ENCODE measurements at regions of chr6 and their contacts with region 1.

Region 1: GRCh38 chr6:106444777-106445507 is 84.4 kb downstream of the CRYBG1 start:
- DNase-seq: peak in 1 of 2 donors; percentile 85
- ATAC-seq: peak; percentile 82 to 93 (median 88)
- H3K4me3 ChIP-seq: no peak overlapping the region
- H3K4me3 Mint-ChIP-seq: no peak overlapping the region
- H3K27ac ChIP-seq: no peak overlapping the region
- H3K27ac Mint-ChIP-seq: no peak overlapping the region
- H3K4me1 ChIP-seq: peaks cover 10% of the 10 kb centered on the region
- H3K4me1 Mint-ChIP-seq: peaks cover 13 to 17% of the 10 kb centered on the region in 2 donors
- H3K27me3 ChIP-seq: no peaks in the 10 kb centered on the region
- H3K27me3 Mint-ChIP-seq: peaks cover 20 to 42% of the 10 kb centered on the region in 2 donors
- CTCF ChIP-seq: peak; percentile 76

Region 2: DNA sequence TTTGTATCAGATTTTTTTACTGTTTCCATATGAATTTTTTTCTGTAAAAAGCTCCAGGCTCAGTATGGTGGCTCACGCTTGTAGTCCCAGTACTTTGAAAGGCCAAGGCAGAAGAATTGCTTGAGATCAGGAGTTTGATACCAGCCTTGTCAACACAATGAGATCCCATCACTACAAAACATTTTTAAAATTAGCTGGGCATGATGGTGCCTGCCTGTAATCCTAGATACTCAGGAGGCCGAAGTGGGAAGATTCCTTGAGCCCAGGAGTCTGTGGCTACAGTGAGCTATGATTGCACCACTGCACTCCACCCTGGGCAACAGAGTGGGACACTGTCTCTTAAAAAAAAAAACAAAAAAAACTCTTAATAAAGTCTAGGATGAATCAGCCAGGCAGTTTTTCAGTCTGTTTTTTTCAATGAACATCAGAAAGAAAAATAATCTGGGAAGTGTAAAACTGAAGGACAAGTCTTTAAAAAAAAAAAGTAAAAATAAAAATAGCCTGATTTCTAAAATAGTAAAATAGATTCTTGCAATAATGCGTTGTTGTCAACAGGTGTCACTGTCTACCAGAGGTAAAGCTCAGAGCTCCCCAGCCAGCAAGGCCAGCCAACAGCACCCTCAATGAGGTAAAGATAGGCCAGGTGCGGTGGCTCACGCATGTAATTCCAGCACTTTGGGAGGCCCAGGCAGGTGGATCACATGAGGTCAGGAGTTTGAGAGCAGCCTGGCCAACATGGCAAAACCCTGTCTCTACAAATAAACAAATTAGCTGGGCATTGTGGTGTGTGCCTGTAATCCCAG is 110.1 kb before region 1 on chr6:
- intact Hi-C with region 1: loop called (anchors 1 kb)
- DNase-seq: peak; percentile 24 to 83
- ATAC-seq: peak; percentile 79 to 88 (median 85)
- H3K4me3 ChIP-seq: no peak overlapping the region
- H3K4me3 Mint-ChIP-seq: no peak overlapping the region
- H3K27ac ChIP-seq: no peak overlapping the region
- H3K27ac Mint-ChIP-seq: no peak overlapping the region
- H3K4me1 ChIP-seq: no peaks in the 10 kb centered on the region
- H3K4me1 Mint-ChIP-seq: peaks cover 7 to 8% of the 10 kb centered on the region in 2 donors
- H3K27me3 ChIP-seq: peaks cover 5% of the 10 kb centered on the region
- H3K27me3 Mint-ChIP-seq: peaks cover 22 to 39% of the 10 kb centered on the region in 2 donors
- CTCF ChIP-seq: peak; percentile 73

Region 3: GRCh38 chr6:106556368-106556960 is 111.5 kb after region 1 on chr6:
- intact Hi-C with region 1: loop called (anchors 1 kb)
- DNase-seq: peak in 1 of 2 donors; percentile 66
- ATAC-seq: peak in 2 of 3 donors; percentile 60
- H3K4me3 ChIP-seq: no peak overlapping the region
- H3K4me3 Mint-ChIP-seq: no peak overlapping the region
- H3K27ac ChIP-seq: no peak overlapping the region
- H3K27ac Mint-ChIP-seq: no peak overlapping the region
- H3K4me1 ChIP-seq: no peaks in the 10 kb centered on the region
- H3K4me1 Mint-ChIP-seq: peaks cover 0 to 4% of the 10 kb centered on the region in 2 donors
- H3K27me3 ChIP-seq: no peaks in the 10 kb centered on the region
- H3K27me3 Mint-ChIP-seq: no peaks in the 10 kb centered on the region
- CTCF ChIP-seq: peak; percentile 45

Measured in natural killer cell (primary cell).